ENCODE measurements at regions of chr12 and their contacts with region 1.

Region 1: DNA sequence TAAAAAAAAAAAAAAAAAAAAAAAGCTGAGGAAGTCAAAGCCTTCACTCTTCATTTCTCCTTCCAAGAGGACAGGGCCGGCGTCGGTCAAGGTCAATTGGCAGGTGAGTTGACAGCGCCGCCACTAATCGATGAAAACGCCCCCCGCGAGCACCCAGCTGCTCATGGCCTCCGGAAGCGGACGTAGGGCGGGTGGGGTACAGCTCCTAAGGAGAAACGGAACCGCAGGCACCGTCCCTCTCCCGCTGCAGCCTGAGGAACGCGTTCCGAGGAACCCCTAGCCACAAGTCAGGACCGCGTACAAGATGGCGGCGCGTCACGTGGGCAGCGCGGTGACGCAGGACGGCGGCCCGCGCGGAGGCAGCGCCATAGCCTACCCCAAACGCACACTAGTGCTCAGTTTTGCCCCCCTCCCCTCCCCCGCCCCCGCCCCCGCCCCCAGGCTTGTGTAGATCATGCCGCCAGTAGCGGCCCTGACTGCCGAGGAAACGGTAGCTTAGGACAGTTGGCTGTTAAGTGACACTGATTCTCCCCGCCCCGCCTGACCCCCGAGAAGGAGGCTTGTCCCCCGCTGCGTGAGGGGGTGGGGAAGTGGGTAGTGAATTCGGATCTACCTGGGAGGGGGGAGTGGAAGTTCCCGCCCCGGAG is at the start of gene ATF1:
- DNase-seq: peak; percentile 92
- ATAC-seq: peak; percentile 83
- H3K4me3 Mint-ChIP-seq: peak within 1 kb of the TSS; percentile 82
- H3K27ac Mint-ChIP-seq: peak within 1 kb of the TSS; percentile 98
- H3K4me1 Mint-ChIP-seq: peaks cover 31% of the 10 kb centered on the region
- H3K27me3 Mint-ChIP-seq: no peaks in the 10 kb centered on the region
- CTCF ChIP-seq: no peak
- total RNA-seq, gene ATF1: 46.6 to 49.8 TPM

Region 2: DNA sequence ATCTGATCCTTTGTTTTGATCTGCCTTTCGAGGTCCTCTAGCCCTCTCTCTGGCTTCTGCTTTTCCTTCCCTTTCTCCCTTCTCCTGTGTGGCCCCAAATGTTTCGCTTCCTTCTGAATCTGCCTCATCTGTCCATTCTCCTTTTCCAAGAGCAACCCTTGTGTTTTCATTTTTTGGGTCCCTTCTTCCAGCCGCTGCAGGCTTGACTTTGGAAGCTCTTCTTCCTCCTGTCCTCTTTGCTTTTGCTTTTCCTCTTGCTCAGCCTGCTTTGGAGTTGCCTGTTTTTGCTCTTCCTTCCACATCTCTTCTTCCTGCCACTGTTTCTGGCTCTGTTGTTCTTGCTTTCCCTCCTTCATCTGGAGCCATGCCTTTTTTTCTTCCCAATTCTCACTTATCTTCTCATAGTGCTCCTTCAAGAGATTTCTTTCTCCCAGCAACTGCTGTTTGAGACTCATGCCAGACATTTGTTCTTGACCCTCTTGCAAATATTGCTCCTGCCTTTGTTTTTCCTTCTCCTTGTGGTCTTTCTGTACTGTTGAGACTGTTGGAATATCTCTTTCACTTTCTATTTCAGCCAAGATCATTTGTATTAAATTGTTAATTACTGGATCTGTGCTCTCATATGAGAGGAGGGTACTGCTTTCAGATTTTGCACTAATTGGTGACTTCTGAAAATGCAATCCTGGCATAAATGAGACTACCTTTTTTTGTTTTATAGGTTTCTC is 409.7 kb before region 1 on chr12:
- CTCF ChIA-PET with region 1: no interaction called
- POLR2A ChIA-PET with region 1: no interaction called
- intact Hi-C with region 1: no loop called
- DNase-seq: no peak
- ATAC-seq: no peak
- H3K4me3 Mint-ChIP-seq: no peak overlapping the region
- H3K27ac Mint-ChIP-seq: no peak overlapping the region
- H3K4me1 Mint-ChIP-seq: no peaks in the 10 kb centered on the region
- H3K27me3 Mint-ChIP-seq: no peaks in the 10 kb centered on the region
- CTCF ChIP-seq: no peak

Region 3: GRCh38 chr12:50775251-50775650 is 11.5 kb after region 1 on chr12:
- CTCF ChIA-PET with region 1: interaction called, 15 read pairs
- POLR2A ChIA-PET with region 1: interaction called, 13 read pairs
- intact Hi-C with region 1: no loop called
- DNase-seq: no peak
- ATAC-seq: no peak
- H3K4me3 Mint-ChIP-seq: no peak overlapping the region
- H3K27ac Mint-ChIP-seq: no peak overlapping the region
- H3K4me1 Mint-ChIP-seq: peaks cover 23% of the 10 kb centered on the region
- H3K27me3 Mint-ChIP-seq: no peaks in the 10 kb centered on the region
- CTCF ChIP-seq: no peak

Region 4: GRCh38 chr12:50825372-50825838 is 61.6 kb after region 1 on chr12:
- CTCF ChIA-PET with region 1: interaction called, 10 read pairs
- POLR2A ChIA-PET with region 1: interaction called, 6 read pairs
- intact Hi-C with region 1: no loop called
- DNase-seq: no peak
- ATAC-seq: peak; percentile 74
- H3K4me3 Mint-ChIP-seq: no peak overlapping the region
- H3K27ac Mint-ChIP-seq: peak overlapping the region; percentile 71
- H3K4me1 Mint-ChIP-seq: peaks cover 8% of the 10 kb centered on the region
- H3K27me3 Mint-ChIP-seq: no peaks in the 10 kb centered on the region
- CTCF ChIP-seq: peak; percentile 75

Region 5: DNA sequence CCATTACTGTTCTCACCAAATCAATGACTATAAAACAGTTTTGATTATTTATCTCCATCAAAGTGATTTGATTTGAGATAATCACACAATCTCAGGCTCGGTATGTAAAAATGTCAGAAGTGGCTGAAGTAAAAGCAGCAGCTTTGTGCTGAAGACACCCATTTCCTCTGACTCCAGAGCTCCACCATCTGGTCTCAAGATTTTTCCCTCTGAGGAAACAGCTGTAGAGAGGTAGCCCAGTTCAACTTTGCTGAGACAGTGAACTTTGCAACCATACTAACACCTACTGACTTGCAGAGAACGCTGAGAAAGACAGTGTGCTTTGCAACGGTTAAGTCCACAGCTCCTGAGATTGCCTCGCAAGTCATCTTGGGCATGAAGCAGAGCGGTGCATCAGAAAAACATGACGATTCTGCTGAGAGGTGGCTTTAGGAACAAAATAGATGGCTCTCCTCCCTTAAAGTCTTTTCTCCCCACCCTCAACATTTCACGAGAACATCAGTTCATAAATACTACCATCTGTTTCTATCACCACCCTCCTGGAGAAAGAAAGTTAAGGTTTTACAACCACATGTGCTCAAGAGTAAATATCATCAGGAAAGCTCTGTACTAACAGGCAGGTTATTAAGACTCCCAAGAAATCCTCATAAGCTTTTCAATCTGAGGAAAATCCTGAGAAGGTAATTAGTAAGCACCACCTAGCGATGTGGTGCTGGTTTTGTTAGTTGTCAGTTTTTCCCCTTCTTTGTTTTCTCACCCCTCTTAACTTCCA is 223.4 kb after region 1 on chr12:
- CTCF ChIA-PET with region 1: interaction called, 24 read pairs
- POLR2A ChIA-PET with region 1: no interaction called
- intact Hi-C with region 1: no loop called
- DNase-seq: peak; percentile 40
- ATAC-seq: peak; percentile 62
- H3K4me3 Mint-ChIP-seq: no peak overlapping the region
- H3K27ac Mint-ChIP-seq: peak overlapping the region; percentile 73
- H3K4me1 Mint-ChIP-seq: peaks cover 44% of the 10 kb centered on the region
- H3K27me3 Mint-ChIP-seq: no peaks in the 10 kb centered on the region
- CTCF ChIP-seq: peak; percentile 25

Region 6: DNA sequence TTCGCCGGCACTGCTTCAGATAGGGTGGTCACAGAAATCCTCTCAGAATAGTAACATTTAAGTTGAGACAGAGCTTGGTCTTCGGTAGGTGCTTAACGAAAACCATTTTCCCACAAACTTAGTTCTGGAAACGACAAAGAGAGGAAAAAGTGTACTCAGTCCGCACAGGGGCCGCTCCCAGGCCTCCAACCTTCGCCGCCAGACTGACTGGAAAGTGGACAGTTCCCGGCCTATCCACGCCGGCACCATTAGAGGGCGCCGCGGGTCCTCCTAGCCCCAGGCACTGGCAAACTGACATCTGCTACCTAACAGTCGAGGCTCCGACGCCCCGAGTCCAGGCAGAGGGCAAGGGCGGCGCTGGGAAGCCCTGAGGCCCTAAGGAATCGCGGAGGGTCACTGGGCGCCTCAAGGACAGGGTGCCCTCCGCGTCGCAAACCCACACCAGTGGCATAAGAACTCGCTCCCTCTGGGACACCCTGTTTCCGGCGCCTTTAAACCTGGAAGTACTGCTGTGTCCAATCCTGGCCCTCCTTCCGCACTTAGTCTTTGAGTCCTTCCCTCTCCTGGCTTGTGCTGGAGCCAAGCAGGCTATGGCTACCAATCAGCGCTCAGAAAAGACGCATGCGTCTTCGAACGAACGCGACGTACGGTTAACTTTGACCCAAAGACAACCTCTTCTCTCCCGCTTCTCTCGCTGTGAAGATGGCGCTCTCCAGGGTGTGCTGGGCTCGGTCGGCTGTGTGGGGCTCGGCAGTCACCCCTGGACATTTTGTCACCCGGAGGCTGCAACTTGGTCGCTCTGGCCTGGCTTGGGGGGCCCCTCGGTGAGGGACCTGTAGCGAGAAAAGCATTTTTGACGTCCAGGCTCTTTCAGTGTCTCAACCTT is 284.1 kb after region 1 on chr12 and contains the start of gene LETMD1:
- CTCF ChIA-PET with region 1: interaction called, 10 read pairs
- POLR2A ChIA-PET with region 1: no interaction called
- intact Hi-C with region 1: no loop called
- DNase-seq: peak; percentile 94
- ATAC-seq: peak; percentile 97
- H3K4me3 Mint-ChIP-seq: peak within 1 kb of the TSS; percentile 97
- H3K27ac Mint-ChIP-seq: peak within 1 kb of the TSS; percentile 96
- H3K4me1 Mint-ChIP-seq: peaks cover 28% of the 10 kb centered on the region
- H3K27me3 Mint-ChIP-seq: no peaks in the 10 kb centered on the region
- CTCF ChIP-seq: peak; percentile 95
- total RNA-seq, gene LETMD1: 71.6 to 81.5 TPM

Measured in activated CD8-positive, alpha-beta T cell treated with anti-CD3 and anti-CD28 coated beads for 36 hours (primary cell).